ENCODE measurements at regions of chr12 and their contacts with region 1.

Region 1: DNA sequence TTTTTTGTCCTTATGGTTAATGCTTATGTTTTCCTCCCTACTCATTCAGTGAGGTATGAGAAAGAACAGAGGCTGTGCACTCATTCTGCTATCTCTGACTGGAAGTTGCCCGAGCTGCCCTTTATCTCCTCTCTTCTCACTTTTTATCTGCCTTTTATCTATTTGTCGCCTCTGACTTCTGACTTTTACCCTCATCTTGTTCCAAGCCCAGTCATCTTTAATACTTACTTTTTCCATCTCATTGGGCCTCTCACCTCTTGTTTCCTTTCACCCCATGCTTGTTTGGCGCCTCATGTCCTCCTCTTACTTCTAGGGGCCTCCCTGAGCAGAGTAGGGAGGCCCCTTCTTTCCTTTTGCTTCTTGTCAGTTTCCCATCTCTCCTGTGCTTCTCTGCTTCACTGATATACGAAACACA is 50.7 kb downstream of the DIP2B start:
- DNase-seq: peak; percentile 77
- H3K4me3 Mint-ChIP-seq: peak overlapping the region; percentile 48
- H3K27ac Mint-ChIP-seq: peak overlapping the region; percentile 90
- H3K4me1 Mint-ChIP-seq: peaks cover 70% of the 10 kb centered on the region
- H3K27me3 Mint-ChIP-seq: no peaks in the 10 kb centered on the region

Region 2: DNA sequence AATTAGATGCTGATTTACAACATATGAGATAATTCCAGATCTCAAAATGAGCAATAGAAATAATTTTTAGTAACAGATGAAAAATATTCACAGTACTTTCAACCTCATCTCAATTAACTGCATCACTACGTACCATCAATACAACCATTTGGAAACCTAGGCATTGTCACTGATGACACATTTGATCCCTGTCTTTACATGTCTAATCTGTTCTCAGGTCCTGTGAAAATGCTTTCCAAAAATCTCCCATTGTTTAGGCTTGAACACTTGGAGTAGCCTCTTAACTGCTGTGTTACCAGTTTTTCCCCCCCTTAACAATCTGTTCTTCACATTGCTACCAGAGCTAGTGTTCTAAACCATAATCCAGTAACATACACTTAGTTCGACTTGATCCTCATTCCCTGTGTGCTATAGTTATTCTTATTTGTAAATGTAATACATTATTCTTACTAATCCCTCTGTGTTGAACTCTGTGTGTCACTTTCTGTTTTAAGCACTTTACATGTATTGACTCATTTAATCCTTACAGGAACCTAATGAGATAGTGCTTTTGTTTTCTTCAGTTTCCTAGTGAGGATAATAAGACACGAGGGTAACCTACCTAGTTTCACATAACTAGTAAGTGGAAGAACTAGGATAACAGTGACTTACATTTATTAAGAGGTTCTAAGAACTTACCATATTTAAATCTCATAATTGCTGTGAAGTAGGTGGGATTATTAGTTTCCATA is 113.1 kb before region 1 on chr12:
- CTCF ChIA-PET with region 1: no interaction called
- intact Hi-C with region 1: loop called (anchors 1 kb)
- DNase-seq: no peak
- H3K4me3 Mint-ChIP-seq: no peak overlapping the region
- H3K27ac Mint-ChIP-seq: peak overlapping the region; percentile 59
- H3K4me1 Mint-ChIP-seq: peaks cover 16% of the 10 kb centered on the region
- H3K27me3 Mint-ChIP-seq: no peaks in the 10 kb centered on the region

Region 3: GRCh38 chr12:50517456-50518048 is 37.9 kb before region 1 on chr12:
- CTCF ChIA-PET with region 1: interaction called, 5 read pairs
- intact Hi-C with region 1: loop called (anchors 1 kb)
- DNase-seq: peak; percentile 23
- H3K4me3 Mint-ChIP-seq: no peak overlapping the region
- H3K27ac Mint-ChIP-seq: no peak overlapping the region
- H3K4me1 Mint-ChIP-seq: peaks cover 69% of the 10 kb centered on the region
- H3K27me3 Mint-ChIP-seq: no peaks in the 10 kb centered on the region

Region 4: DNA sequence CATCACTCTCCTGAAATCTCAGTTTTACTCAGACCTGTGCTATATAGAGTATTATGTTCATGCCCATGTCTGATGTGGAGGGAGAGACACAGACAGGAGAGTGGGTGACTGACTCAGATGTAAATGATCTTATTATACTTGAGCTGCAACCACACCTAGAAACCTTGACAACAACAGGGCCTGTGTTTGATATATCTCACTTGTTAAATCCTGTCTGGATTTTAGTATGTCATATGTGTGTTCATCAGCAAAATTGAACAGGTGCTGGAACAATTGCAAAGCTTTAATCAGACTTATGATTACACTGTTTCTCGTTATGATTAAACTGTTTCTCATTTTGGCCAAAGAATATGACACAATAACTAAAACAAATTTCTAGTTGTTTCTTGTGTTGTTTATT is 13.0 kb before region 1 on chr12:
- CTCF ChIA-PET with region 1: interaction called, 3 read pairs
- intact Hi-C with region 1: loop called (anchors 1 kb)
- DNase-seq: peak; percentile 64
- H3K4me3 Mint-ChIP-seq: no peak overlapping the region
- H3K27ac Mint-ChIP-seq: peak overlapping the region; percentile 85
- H3K4me1 Mint-ChIP-seq: peaks cover 55% of the 10 kb centered on the region
- H3K27me3 Mint-ChIP-seq: no peaks in the 10 kb centered on the region

Region 5: DNA sequence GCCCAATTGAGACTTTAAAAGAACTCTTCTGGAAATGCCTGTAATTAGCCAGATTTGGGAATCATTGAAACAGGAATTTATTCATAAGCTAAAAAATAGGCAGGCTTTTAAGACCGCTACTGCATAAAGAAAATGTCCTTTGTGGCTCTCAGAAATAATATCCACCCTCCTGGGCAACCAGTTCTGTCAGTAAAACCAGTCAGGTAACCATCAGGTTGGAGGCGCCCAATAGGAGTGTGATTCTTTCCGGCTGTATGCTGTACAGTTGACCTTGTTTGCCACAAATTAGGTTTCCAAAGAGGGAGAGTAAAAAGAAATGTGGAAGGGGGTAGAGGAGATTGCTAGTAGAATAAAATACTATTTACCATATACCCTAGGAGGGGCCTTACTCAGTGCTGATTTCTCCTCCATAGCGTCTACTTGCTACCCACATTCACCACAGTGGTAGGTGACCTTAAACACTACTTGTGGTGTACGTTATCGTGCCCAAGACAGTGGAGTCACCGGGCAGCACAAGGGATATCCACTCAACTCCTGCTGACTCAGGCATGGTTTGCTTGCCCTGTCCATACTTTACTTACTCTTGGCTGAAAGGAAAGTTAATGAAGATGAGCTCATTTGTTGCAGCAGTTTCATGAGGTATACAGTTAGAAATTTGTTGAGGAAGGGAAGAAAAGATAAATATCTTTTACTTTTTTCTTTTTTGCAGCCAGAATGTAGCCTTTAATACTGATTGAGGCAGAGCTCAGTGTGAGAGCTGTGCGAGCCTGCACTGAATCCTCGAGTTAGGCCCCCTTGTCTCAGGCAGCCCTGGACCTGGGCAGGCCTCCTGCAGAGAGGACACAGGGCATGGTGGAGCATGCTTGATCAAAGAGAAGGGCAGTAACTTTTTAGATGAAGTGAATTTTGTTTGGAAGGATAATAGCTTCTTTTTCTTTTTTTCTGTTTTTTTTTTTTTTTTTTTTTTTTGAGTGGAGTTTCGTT is 26.0 kb after region 1 on chr12:
- CTCF ChIA-PET with region 1: no interaction called
- intact Hi-C with region 1: loop called (anchors 2 kb)
- DNase-seq: no peak
- H3K4me3 Mint-ChIP-seq: no peak overlapping the region
- H3K27ac Mint-ChIP-seq: no peak overlapping the region
- H3K4me1 Mint-ChIP-seq: peaks cover 27% of the 10 kb centered on the region
- H3K27me3 Mint-ChIP-seq: no peaks in the 10 kb centered on the region

Region 6: GRCh38 chr12:50597200-50598195 is 42.0 kb after region 1 on chr12:
- CTCF ChIA-PET with region 1: no interaction called
- intact Hi-C with region 1: loop called (anchors 1 kb)
- DNase-seq: peak; percentile 85
- H3K4me3 Mint-ChIP-seq: peak overlapping the region; percentile 57
- H3K27ac Mint-ChIP-seq: peak overlapping the region; percentile 95
- H3K4me1 Mint-ChIP-seq: peaks cover 49% of the 10 kb centered on the region
- H3K27me3 Mint-ChIP-seq: no peaks in the 10 kb centered on the region

Region 7: DNA sequence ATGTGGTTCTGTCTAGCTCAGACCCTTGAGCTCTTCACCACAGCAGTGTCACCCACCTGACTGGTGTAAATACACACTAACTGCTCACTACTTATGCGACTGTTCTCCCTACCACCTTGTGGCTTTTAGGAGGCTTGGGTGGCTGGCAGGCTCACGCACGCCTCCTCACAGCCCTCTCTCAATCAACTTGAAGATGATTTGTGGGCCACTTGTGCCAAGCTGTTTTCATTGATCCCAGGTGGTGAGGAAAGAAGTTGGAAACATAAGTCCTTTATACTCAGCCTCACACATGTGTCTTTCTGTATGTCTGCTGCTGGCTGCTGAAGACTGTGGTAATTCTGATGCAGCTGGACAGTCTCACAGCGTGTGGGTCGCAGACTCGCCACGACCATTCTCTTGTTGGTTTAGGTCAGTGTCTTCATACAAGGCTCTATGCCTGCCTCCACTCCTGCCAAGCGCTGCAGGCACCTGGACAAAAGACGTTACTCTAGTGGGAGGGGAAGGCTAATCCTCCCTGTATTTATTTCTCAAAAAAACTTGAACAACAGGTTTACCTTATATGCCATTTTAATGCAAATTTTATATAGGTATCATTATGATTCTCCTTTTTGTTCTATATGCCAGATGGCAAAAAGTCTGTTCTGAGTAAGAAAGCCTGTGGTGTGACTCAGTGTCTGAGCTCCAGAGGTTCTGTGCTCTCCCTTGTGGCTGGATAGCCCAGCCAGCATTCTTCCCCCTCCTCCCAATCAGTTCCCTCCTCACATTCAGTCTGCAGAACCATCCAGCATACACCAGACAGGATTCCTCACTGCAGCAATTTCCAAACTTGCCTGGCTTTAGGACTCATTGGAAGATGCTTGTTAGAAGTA is 64.9 kb after region 1 on chr12:
- CTCF ChIA-PET with region 1: no interaction called
- intact Hi-C with region 1: loop called (anchors 1 kb)
- DNase-seq: peak; percentile 63
- H3K4me3 Mint-ChIP-seq: no peak overlapping the region
- H3K27ac Mint-ChIP-seq: peak overlapping the region; percentile 70
- H3K4me1 Mint-ChIP-seq: peaks cover 74% of the 10 kb centered on the region
- H3K27me3 Mint-ChIP-seq: no peaks in the 10 kb centered on the region

Measured in activated naive CD4-positive, alpha-beta T cell treated with anti-CD3 and anti-CD28 coated beads for 36 hours (primary cell).